OCI-LY7 (cell line): ENCODE measurements at regions of chr9 and their contacts with region 1.

Region 1: GRCh38 chr9:133726401-133727276 is 11.5 kb downstream of the SARDH start:
- DNase-seq: peak; percentile 64
- H3K4me3 ChIP-seq: no peak overlapping the region
- H3K27ac ChIP-seq: no peak overlapping the region
- H3K4me1 ChIP-seq: no peaks in the 10 kb centered on the region
- CTCF ChIP-seq: peak; percentile 73

Region 2: DNA sequence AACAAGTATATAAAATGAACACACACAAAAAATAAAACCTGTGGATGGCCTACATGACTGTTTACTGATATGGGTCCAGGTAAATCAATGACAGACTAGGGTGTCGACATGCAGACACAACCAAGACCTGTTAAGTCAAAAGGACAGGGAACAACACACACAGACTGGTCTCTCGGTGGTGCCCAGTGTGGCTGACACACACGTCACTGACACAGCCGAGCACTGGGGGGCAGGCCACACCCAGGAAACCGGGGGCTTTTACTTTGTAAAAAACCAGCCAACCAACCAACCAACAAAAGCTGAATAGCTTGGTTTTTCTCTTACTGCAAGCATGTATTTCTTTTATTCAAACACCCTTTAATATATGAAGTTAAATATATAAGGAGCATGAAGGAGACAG is 122.4 kb before region 1 on chr9:
- CTCF ChIA-PET with region 1: no interaction called
- POLR2A ChIA-PET with region 1: no interaction called
- intact Hi-C with region 1: loop called (anchors 2 kb)
- DNase-seq: peak; percentile 65
- H3K4me3 ChIP-seq: no peak overlapping the region
- H3K27ac ChIP-seq: no peak overlapping the region
- H3K4me1 ChIP-seq: peaks cover 12% of the 10 kb centered on the region
- CTCF ChIP-seq: peak; percentile 76

Region 3: DNA sequence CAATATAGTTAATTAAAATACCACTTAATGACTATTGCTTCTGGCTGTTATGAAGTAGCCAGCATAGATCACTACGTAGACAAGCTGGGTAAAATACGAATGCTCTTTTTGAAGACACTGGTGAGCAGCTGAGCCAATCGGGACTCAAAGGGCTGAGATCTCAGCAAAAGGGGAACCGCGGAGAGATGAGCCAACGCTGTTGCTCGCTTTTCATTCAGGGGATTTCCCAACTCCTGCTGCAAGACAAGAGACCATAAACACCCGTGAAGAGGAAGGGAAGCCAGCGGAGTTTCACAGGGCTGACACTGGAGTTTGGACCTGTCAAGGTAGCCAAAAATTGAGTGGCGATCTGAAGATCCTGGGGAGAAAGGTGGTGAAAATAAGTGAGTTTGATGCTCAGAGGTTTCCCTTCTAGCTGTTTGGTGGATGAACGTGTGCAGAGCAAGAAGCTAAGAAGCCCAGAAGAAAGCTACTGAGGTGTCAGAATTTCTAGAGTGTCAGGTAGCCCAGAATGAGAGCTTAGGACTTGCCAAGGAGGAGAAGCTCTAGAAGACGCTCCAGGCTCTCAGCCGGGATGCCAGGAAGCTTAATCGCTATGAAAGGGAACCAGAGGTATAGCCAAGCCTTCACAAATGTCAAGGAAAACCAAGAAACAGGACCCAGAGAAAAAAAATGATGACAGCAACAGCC is 517.3 kb after region 1 on chr9:
- CTCF ChIA-PET with region 1: no interaction called
- POLR2A ChIA-PET with region 1: no interaction called
- intact Hi-C with region 1: no loop called
- DNase-seq: peak; percentile 86
- H3K4me3 ChIP-seq: peak overlapping the region; percentile 26
- H3K27ac ChIP-seq: peak overlapping the region; percentile 50
- H3K4me1 ChIP-seq: peaks cover 26% of the 10 kb centered on the region
- CTCF ChIP-seq: no peak